Posterior cingulate gyrus (tissue), 11 donors: ENCODE measurements at regions of chr12 and their contacts with region 1.

Region 1: GRCh38 chr12:94560431-94561221 is 89.7 kb downstream of the TMCC3 start:
- DNase-seq: peak; percentile 27 to 94 (median 66)

Region 2: GRCh38 chr12:94615284-94616181 is 54.9 kb after region 1 on chr12:
- intact Hi-C with region 1: loop called (anchors 5 kb)
- DNase-seq: peak in 5 of 10 donors; percentile 23 to 91 (median 51)